K562 (cell line): ENCODE measurements at regions of chr17 and their contacts with region 1.

Region 1: GRCh38 chr17:31524926-31525800 is 133.7 kb downstream of the RAB11FIP4 start:
- DNase-seq: peak; percentile 87 to 88 (median 88)
- ATAC-seq: peak; percentile 98
- H3K4me3 ChIP-seq: no peak overlapping the region
- H3K27ac ChIP-seq: no peak overlapping the region
- H3K4me1 ChIP-seq: peaks cover 0 to 24% of the 10 kb centered on the region in 2 experiments; a peak in 2 of 5 replicates
- H3K27me3 ChIP-seq: no peaks in the 10 kb centered on the region
- CTCF ChIP-seq: peak; percentile 90 to 98 (median 97)
- EP300 ChIP-seq: no peak
- POLR2A ChIP-seq: no peak
- RAD21 ChIP-seq: peak; percentile 90 to 98

Region 2: GRCh38 chr17:31388770-31389661 is 136.1 kb before region 1 on chr17:
- CTCF ChIA-PET with region 1: interaction called, 22 read pairs
- POLR2A ChIA-PET with region 1: no interaction called
- in situ Hi-C with region 1: no loop called
- intact Hi-C with region 1: loop called (anchors 1 kb)
- DNase-seq: peak; percentile 45 to 74 (median 70)
- ATAC-seq: peak; percentile 85
- H3K4me3 ChIP-seq: no peak overlapping the region
- H3K27ac ChIP-seq: no peak overlapping the region
- H3K4me1 ChIP-seq: peaks cover 0 to 21% of the 10 kb centered on the region in 2 experiments; a peak in 3 of 5 replicates
- H3K27me3 ChIP-seq: peaks cover 17 to 45% of the 10 kb centered on the region in 2 experiments; a peak in 4 of 5 replicates
- CTCF ChIP-seq: peak; percentile 77 to 86 (median 82)
- EP300 ChIP-seq: no peak
- POLR2A ChIP-seq: no peak
- RAD21 ChIP-seq: peak; percentile 45 to 69; a peak in 3 of 4 replicates

Region 3: GRCh38 chr17:31433091-31433790 is 91.9 kb before region 1 on chr17:
- CTCF ChIA-PET with region 1: interaction called, 68 read pairs
- POLR2A ChIA-PET with region 1: interaction called, 5 read pairs
- in situ Hi-C with region 1: no loop called
- intact Hi-C with region 1: loop called (anchors 1 kb)
- DNase-seq: no peak
- ATAC-seq: 0 out of 3 replicates have a peak, but pooled peaks have one; percentile 11
- H3K4me3 ChIP-seq: no peak overlapping the region
- H3K27ac ChIP-seq: no peak overlapping the region
- H3K4me1 ChIP-seq: peaks cover 0 to 16% of the 10 kb centered on the region in 2 experiments; a peak in 2 of 5 replicates
- H3K27me3 ChIP-seq: peaks cover 35 to 61% of the 10 kb centered on the region in 2 experiments
- CTCF ChIP-seq: no peak
- EP300 ChIP-seq: no peak
- POLR2A ChIP-seq: no peak
- RAD21 ChIP-seq: no peak

Region 4: GRCh38 chr17:31444026-31444425 is 81.1 kb before region 1 on chr17:
- CTCF ChIA-PET with region 1: interaction called, 68 read pairs
- POLR2A ChIA-PET with region 1: interaction called, 5 read pairs
- in situ Hi-C with region 1: loop called (anchors 5 kb)
- intact Hi-C with region 1: no loop called
- DNase-seq: no peak
- ATAC-seq: no peak
- H3K4me3 ChIP-seq: no peak overlapping the region
- H3K27ac ChIP-seq: no peak overlapping the region
- H3K4me1 ChIP-seq: no peaks in the 10 kb centered on the region; a peak in 1 of 5 replicates
- H3K27me3 ChIP-seq: peaks cover 0 to 17% of the 10 kb centered on the region in 2 experiments; a peak in 2 of 5 replicates
- CTCF ChIP-seq: no peak
- EP300 ChIP-seq: no peak
- POLR2A ChIP-seq: no peak
- RAD21 ChIP-seq: no peak

Region 5: GRCh38 chr17:31696184-31696602 is 171.0 kb after region 1 on chr17:
- CTCF ChIA-PET with region 1: no interaction called
- POLR2A ChIA-PET with region 1: no interaction called
- in situ Hi-C with region 1: no loop called
- intact Hi-C with region 1: no loop called
- DNase-seq: no peak
- ATAC-seq: peak; percentile 47; the same call in 1 of the 3 replicates
- H3K4me3 ChIP-seq: no peak overlapping the region
- H3K27ac ChIP-seq: no peak overlapping the region
- H3K4me1 ChIP-seq: no peaks in the 10 kb centered on the region
- H3K27me3 ChIP-seq: peaks cover 20 to 48% of the 10 kb centered on the region in 2 experiments; a peak in 4 of 5 replicates
- CTCF ChIP-seq: no peak
- EP300 ChIP-seq: no peak
- POLR2A ChIP-seq: no peak
- RAD21 ChIP-seq: no peak